ENCODE measurements at regions of chr6 and their contacts with region 1.

Region 1: GRCh38 chr6:108113557-108114519 is 39.3 kb upstream of the OSTM1 start:
- DNase-seq: peak in 2 of 10 donors; percentile 22 to 69

Region 2: GRCh38 chr6:107786709-107787588 is 326.9 kb before region 1 on chr6:
- intact Hi-C with region 1: no loop called
- DNase-seq: no peak

Region 3: GRCh38 chr6:108168501-108169463 is 54.9 kb after region 1 on chr6:
- intact Hi-C with region 1: loop called (anchors 5 kb)
- DNase-seq: peak in 5 of 10 donors; percentile 30 to 87 (median 72)

Region 4: DNA sequence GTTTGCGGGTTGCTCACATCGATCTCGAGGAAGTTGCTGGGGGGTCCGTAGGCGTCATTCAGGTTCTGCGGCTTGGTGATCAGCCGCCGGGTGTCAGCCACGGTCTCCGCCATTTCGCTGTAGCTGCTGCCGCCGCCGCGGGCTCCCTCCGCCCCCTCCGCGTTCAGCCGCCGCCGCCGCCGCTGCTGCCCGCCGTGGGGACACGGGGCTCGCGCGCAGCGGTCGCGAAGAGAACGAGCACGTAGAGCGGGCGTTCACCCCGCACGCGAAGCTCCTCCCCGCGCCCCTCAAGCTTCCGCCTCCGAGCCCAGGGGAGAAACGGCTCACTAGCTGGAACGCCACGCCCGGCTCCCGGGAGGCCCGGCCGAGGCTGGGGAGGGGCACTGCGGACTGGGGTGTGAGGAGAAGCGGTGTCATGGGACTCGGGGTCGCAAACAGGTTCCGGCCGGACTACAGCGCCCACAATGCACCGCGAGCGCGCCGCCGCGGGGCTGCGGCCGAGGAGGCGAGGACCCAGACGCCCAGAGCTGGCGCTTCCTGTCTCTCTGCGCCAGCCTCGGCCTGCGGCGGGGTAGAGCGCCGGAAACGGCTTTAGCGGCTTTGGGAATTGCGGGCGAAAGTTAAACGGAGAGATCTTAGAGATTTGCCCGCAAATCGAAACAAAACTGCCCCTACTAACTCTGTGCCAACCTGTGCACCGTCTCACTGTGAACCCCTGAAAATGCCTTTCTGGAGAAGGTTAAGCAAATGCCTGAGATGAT is 147.2 kb after region 1 on chr6 and contains the start of gene SNX3:
- intact Hi-C with region 1: loop called (anchors 10 kb)
- DNase-seq: peak; percentile 84 to 98 (median 89)

Region 5: DNA sequence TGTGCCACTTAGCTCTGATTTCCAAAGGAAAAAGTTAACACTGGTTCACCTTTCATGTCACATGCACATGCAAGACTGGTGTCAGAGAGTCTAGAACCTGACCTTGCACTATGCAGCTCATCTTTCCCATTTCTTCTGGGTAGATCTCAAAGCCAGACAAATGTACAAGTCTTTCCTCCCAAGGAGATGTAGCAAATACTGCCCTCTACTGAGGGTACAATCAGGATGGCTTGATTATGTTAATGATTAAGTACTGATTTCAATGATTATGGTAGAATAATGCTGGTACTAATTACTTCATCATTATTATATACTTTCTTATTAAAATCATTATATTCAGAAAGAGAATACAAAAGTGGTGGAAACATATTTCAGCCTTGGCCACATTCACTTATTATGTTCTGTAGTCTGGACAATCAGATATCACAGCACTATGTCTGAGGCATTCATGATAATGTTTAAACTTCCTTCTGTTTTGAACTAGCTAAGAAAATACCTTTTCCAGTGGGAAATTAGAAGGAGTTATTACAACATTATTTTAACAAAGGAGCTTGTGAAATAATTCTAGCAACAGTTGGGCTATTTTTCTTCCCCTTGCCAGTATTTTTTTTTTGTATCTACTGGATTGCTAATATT is 378.4 kb after region 1 on chr6:
- intact Hi-C with region 1: loop called (anchors 2 kb)
- DNase-seq: no peak

Region 6: GRCh38 chr6:108526739-108527174 is 412.9 kb after region 1 on chr6:
- intact Hi-C with region 1: loop called (anchors 1 kb)
- DNase-seq: no peak